ENCODE measurements at regions of chr17 and their contacts with region 1.

Region 1: DNA sequence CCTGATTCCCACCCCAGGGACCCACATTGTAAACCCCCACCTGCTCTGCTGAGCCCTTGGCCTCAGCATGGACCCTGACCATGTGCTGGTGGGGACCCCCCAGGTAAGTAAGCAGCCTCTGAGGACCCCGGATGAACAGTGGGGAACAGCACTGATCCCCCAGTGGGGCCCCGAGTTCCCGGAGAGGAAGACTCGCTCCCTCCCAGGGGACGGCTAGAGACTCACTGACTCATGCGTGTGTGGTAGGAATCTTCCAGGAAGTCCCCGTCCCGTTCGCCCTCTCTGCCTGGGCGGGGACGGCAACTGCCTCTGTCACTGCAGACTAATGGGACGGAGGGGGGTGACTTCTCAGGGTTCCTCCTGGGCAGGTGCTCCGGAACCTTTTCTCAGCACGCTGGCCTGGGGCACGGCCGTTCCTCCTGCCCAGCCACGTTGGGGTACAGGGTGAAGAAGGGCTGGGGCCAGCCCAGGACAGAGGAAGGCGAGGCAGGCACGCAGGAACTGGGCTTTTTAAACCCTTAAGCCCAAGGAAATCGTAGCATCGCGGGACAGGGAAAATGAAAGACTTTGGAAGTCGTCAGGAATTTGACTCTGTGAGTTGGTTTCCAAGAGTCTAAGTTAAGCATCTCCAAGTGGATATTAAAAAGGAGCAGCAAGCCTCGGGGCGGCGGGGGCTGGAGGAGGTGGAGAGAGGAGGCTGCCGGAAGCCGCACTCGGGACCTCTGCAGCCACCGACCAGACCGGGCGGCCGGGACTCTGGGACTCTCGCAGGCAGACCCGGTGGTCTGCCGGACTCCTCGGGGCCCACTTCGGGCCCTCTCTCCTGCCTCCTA is 178.7 kb downstream of the SEC14L1 start:
- DNase-seq: peak; percentile 46
- H3K4me3 Mint-ChIP-seq: peak overlapping the region; percentile 87
- H3K27ac Mint-ChIP-seq: peak overlapping the region; percentile 92
- H3K4me1 Mint-ChIP-seq: peaks cover 22% of the 10 kb centered on the region
- H3K27me3 Mint-ChIP-seq: no peaks in the 10 kb centered on the region

Region 2: GRCh38 chr17:77280980-77281903 is 38.2 kb before region 1 on chr17:
- intact Hi-C with region 1: loop called (anchors 5 kb)
- DNase-seq: peak; percentile 58
- H3K4me3 Mint-ChIP-seq: peak overlapping the region; percentile 69
- H3K27ac Mint-ChIP-seq: no peak overlapping the region
- H3K4me1 Mint-ChIP-seq: peaks cover 11% of the 10 kb centered on the region
- H3K27me3 Mint-ChIP-seq: peaks cover 41% of the 10 kb centered on the region

Region 3: GRCh38 chr17:77304051-77304745 is 15.2 kb before region 1 on chr17:
- intact Hi-C with region 1: no loop called
- DNase-seq: no peak
- H3K4me3 Mint-ChIP-seq: no peak overlapping the region
- H3K27ac Mint-ChIP-seq: no peak overlapping the region
- H3K4me1 Mint-ChIP-seq: no peaks in the 10 kb centered on the region
- H3K27me3 Mint-ChIP-seq: no peaks in the 10 kb centered on the region

Region 4: GRCh38 chr17:77345260-77345910 is 26.0 kb after region 1 on chr17:
- intact Hi-C with region 1: no loop called
- DNase-seq: no peak
- H3K4me3 Mint-ChIP-seq: no peak overlapping the region
- H3K27ac Mint-ChIP-seq: no peak overlapping the region
- H3K4me1 Mint-ChIP-seq: peaks cover 36% of the 10 kb centered on the region
- H3K27me3 Mint-ChIP-seq: no peaks in the 10 kb centered on the region

Region 5: GRCh38 chr17:77857613-77858012 is 538.2 kb after region 1 on chr17:
- intact Hi-C with region 1: no loop called
- DNase-seq: no peak
- H3K4me3 Mint-ChIP-seq: no peak overlapping the region
- H3K27ac Mint-ChIP-seq: no peak overlapping the region
- H3K4me1 Mint-ChIP-seq: peaks cover 6% of the 10 kb centered on the region
- H3K27me3 Mint-ChIP-seq: peaks cover 12% of the 10 kb centered on the region